Body of pancreas (tissue), 4 donors: ENCODE measurements at regions of chr2 and their contacts with region 1.

Region 1: GRCh38 chr2:26605195-26605998 is 35.8 kb downstream of the CIB4 start:
- DNase-seq: peak; percentile 39 to 51 (median 46)
- ATAC-seq: peak; percentile 51
- H3K4me3 ChIP-seq: no peak overlapping the region
- H3K27ac ChIP-seq: no peak overlapping the region
- H3K4me1 ChIP-seq: peaks cover 23% of the 10 kb centered on the region
- H3K27me3 ChIP-seq: no peaks in the 10 kb centered on the region
- CTCF ChIP-seq: peak; percentile 67 to 92 (median 85)
- POLR2A ChIP-seq: no peak

Region 2: DNA sequence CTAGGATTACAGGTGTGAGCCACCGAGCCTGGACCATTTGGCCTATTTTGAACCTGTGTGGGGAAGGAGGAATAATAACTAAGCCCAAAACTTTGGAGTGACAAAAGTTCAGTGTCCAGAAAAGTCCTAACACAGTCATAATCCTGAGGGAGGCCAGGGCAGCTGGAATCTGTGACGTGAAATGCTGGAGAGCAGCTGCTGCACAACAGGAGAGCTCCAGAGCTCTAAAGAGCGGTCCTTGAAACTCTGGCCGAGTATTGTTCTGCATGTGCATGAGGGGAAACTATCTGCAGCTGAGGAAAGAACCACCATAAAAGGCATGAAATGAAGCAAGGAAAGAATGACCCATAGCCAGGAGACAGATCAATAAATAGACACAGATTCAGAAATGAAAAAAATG is 388.8 kb before region 1 on chr2:
- intact Hi-C with region 1: no loop called
- DNase-seq: no peak
- ATAC-seq: no peak
- H3K4me3 ChIP-seq: no peak overlapping the region
- H3K27ac ChIP-seq: no peak overlapping the region
- H3K4me1 ChIP-seq: no peaks in the 10 kb centered on the region
- H3K27me3 ChIP-seq: no peaks in the 10 kb centered on the region
- CTCF ChIP-seq: no peak
- POLR2A ChIP-seq: no peak

Region 3: DNA sequence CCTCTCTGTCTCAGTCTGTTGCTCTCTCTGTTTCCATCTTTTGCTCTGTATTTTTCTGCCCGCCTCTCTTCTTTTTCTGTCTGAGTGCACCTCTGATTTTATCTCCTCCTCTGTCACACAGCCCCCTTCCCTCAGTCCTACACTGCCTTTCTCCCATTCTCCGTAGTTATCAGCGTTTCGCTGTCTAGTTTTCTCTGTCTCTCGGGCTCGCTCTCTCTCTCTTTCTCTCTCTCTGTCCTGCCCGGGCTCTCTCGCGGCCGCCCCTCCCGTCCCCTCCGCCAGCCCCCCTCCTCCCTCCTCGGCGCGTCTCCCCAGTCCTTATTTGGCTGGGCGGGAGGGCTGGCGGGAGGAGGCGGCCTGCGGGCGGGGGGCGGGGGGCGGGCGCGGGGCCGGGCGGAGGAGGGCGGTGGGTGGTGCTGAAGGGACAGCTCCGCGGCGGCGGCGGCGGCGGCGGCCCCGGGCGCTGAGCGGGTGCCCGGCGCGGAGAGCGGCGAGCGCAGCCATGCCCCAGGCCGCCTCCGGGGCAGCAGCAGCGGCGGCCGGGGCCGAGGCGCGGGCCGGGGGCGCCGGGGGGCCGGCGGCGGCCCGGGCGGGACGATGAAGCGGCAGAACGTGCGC is 87.0 kb after region 1 on chr2 and contains the start of gene KCNK3:
- intact Hi-C with region 1: no loop called
- DNase-seq: peak; percentile 74 to 77 (median 74)
- ATAC-seq: peak; percentile 70
- H3K4me3 ChIP-seq: peak within 1 kb of the TSS; percentile 11 to 35
- H3K27ac ChIP-seq: peak within 1 kb of the TSS; percentile 72 to 90 (median 88)
- H3K4me1 ChIP-seq: peaks cover 88% of the 10 kb centered on the region
- H3K27me3 ChIP-seq: no peaks in the 10 kb centered on the region
- CTCF ChIP-seq: peak in 1 of 7 experiments; percentile 11
- POLR2A ChIP-seq: no peak
- total RNA-seq, gene KCNK3: 10.5 to 20.5 TPM

Region 4: DNA sequence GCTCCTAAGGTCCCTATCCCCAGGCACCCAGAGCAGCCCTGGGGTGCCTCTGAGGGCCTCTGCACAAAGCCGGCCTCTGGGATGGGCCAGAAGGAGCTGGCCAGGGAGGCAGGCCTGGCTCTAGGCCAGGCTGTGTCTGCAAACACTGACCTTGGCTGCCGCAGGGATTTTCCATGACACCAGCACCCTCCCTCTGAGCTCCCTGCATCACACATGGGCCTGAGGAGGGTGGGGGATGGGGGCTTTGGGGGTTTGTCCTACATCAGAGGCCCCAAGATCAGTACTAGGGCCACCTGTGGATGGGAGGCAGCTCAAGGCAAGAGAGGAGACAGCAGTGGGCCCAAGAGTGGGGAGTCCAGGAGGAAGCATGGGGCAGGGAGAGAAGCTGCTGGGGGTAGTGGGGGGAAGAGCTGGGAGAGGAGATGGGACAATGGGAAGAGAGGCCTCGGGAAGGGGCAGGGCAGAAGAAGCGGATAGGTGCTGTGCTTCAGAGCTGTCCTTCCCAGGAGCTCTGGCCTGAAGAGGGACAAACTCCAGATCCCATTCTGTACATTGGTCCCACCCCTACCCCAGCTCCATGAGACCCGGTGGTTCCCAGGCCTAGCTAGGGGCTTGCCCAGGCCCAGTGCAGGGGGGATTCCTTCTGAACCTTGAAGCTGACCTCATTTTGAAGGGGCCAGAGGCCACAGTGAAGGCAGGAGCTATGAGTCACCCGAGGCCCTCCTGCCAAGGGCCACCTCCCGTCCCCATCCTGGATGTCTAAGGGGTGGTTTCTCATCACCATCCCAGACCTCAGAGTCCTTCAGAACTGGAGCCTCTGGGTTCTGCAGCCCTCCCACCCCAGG is 115.1 kb after region 1 on chr2:
- intact Hi-C with region 1: no loop called
- DNase-seq: peak; percentile 91 to 97 (median 96)
- ATAC-seq: peak; percentile 75
- H3K4me3 ChIP-seq: no peak overlapping the region
- H3K27ac ChIP-seq: peak overlapping the region; percentile 92 to 98 (median 94)
- H3K4me1 ChIP-seq: peaks cover 84% of the 10 kb centered on the region
- H3K27me3 ChIP-seq: no peaks in the 10 kb centered on the region
- CTCF ChIP-seq: no peak
- POLR2A ChIP-seq: peak in 1 of 3 donors; percentile 34

Region 5: GRCh38 chr2:26740890-26741302 is 135.5 kb after region 1 on chr2:
- intact Hi-C with region 1: loop called (anchors 5 kb)
- DNase-seq: no peak
- ATAC-seq: no peak
- H3K4me3 ChIP-seq: no peak overlapping the region
- H3K27ac ChIP-seq: no peak overlapping the region
- H3K4me1 ChIP-seq: peaks cover 3% of the 10 kb centered on the region
- H3K27me3 ChIP-seq: no peaks in the 10 kb centered on the region
- CTCF ChIP-seq: no peak
- POLR2A ChIP-seq: no peak